CD8-positive, alpha-beta T cell (primary cell): ENCODE measurements at regions of chr6 and their contacts with region 1.

Region 1: GRCh38 chr6:119340796-119341487 is 8.6 kb downstream of the MAN1A1 start:
- DNase-seq: no peak
- ATAC-seq: no peak
- H3K4me3 ChIP-seq: no peak overlapping the region
- H3K4me3 Mint-ChIP-seq: no peak overlapping the region
- H3K27ac ChIP-seq: no peak overlapping the region
- H3K27ac Mint-ChIP-seq: peak overlapping the region; percentile 52
- H3K4me1 ChIP-seq: peaks cover under 1% of the 10 kb centered on the region
- H3K4me1 Mint-ChIP-seq: peaks cover 53% of the 10 kb centered on the region
- H3K27me3 ChIP-seq: no peaks in the 10 kb centered on the region
- H3K27me3 Mint-ChIP-seq: no peaks in the 10 kb centered on the region
- CTCF ChIP-seq: no peak

Region 2: DNA sequence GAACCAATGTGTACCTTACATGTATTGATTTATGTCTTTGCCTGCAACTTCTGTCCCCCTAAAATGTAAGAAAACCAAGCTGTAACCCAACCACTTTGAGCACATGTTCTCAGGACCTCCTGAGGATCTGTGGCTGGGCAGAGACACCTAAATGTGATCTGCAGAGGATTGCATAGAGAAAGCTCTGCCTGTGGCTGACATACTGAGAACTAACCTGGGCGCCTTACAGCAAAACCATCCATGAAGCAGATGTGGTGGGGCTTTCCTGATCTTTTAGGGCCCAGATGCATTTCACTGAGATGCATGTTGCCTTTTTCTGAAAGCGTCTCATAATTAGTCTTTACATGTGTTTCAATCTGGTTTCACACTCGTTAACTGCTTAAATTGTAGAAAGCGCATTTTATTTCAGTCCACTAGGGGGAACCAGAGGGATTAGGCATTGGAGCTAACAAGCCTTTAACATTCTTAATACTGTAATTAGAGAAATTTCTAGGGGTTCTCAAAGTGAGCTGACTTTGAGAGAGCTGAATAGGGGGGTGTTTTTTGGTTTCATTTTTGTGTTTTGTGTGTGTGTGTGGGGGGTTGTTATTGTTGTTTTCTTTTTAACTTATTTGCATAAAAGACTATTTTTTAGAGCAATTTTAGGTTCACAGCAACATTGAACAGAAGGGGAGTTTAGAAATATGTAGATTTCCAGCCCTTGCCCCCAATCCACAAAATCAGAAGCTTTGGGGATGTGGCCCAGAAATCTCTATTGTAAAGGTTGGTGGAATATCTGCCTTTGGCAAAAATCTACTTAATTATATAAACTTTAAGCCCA is 211.6 kb before region 1 on chr6:
- CTCF ChIA-PET with region 1: no interaction called
- POLR2A ChIA-PET with region 1: no interaction called
- intact Hi-C with region 1: loop called in 1 of 2 experiments (anchors 1 kb)
- DNase-seq: peak in 3 of 9 experiments; percentile 28 to 76 (median 72)
- ATAC-seq: peak; percentile 72
- H3K4me3 ChIP-seq: no peak overlapping the region
- H3K4me3 Mint-ChIP-seq: no peak overlapping the region
- H3K27ac ChIP-seq: no peak overlapping the region
- H3K27ac Mint-ChIP-seq: no peak overlapping the region
- H3K4me1 ChIP-seq: no peaks in the 10 kb centered on the region
- H3K4me1 Mint-ChIP-seq: peaks cover 3% of the 10 kb centered on the region
- H3K27me3 ChIP-seq: no peaks in the 10 kb centered on the region
- H3K27me3 Mint-ChIP-seq: peaks cover 2% of the 10 kb centered on the region
- CTCF ChIP-seq: peak; percentile 81

Region 3: GRCh38 chr6:119322715-119323350 is 18.1 kb before region 1 on chr6:
- CTCF ChIA-PET with region 1: no interaction called
- POLR2A ChIA-PET with region 1: interaction called, 3 read pairs
- intact Hi-C with region 1: loop called in 1 of 2 experiments (anchors 2 kb)
- DNase-seq: peak in 6 of 9 experiments; percentile 47 to 87 (median 68)
- ATAC-seq: peak; percentile 93
- H3K4me3 ChIP-seq: no peak overlapping the region
- H3K4me3 Mint-ChIP-seq: peak overlapping the region; percentile 49
- H3K27ac ChIP-seq: peak overlapping the region in 1 of 2 experiments; percentile 38
- H3K27ac Mint-ChIP-seq: peak overlapping the region; percentile 41
- H3K4me1 ChIP-seq: peaks cover 18% of the 10 kb centered on the region
- H3K4me1 Mint-ChIP-seq: peaks cover 21% of the 10 kb centered on the region
- H3K27me3 ChIP-seq: no peaks in the 10 kb centered on the region
- H3K27me3 Mint-ChIP-seq: no peaks in the 10 kb centered on the region
- CTCF ChIP-seq: no peak

Region 4: DNA sequence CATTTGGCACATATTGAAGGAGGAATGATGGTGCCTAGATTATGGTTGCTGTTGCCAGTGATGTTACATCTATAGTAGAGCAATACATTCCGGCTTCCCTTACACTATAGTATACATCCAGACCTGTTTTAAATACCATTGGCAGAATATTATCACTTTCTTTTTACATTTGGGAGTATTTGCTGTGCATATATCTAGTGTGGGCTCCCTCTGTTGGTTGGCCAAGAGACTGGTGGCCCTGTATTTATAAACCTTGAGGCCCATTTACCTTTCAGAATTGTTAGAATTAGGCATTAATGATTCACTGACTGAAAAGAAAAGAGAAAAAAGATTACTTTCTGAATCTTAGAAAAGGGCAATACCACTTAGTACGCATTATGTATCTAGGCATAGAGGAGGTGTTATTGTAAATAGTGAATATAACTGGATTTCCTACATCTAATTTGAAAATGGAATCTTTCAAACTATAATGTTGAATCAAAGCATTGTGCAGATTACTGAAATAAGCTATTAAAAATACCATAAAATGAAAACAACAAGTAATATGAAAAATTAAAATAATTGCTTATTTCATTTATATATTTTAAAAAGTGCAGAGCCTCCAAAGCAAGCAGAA is 637.4 kb after region 1 on chr6:
- CTCF ChIA-PET with region 1: no interaction called
- POLR2A ChIA-PET with region 1: no interaction called
- intact Hi-C with region 1: loop called in 1 of 2 experiments (anchors 5 kb)
- DNase-seq: peak in 2 of 9 experiments; percentile 13 to 18
- ATAC-seq: no peak
- H3K4me3 ChIP-seq: no peak overlapping the region
- H3K4me3 Mint-ChIP-seq: no peak overlapping the region
- H3K27ac ChIP-seq: no peak overlapping the region
- H3K27ac Mint-ChIP-seq: no peak overlapping the region
- H3K4me1 ChIP-seq: no peaks in the 10 kb centered on the region
- H3K4me1 Mint-ChIP-seq: no peaks in the 10 kb centered on the region
- H3K27me3 ChIP-seq: no peaks in the 10 kb centered on the region
- H3K27me3 Mint-ChIP-seq: no peaks in the 10 kb centered on the region
- CTCF ChIP-seq: no peak